Activated naive CD4-positive, alpha-beta T cell treated with anti-CD3 and anti-CD28 coated beads for 36 hours (primary cell): ENCODE measurements at regions of chr4 and their contacts with region 1.

Region 1: DNA sequence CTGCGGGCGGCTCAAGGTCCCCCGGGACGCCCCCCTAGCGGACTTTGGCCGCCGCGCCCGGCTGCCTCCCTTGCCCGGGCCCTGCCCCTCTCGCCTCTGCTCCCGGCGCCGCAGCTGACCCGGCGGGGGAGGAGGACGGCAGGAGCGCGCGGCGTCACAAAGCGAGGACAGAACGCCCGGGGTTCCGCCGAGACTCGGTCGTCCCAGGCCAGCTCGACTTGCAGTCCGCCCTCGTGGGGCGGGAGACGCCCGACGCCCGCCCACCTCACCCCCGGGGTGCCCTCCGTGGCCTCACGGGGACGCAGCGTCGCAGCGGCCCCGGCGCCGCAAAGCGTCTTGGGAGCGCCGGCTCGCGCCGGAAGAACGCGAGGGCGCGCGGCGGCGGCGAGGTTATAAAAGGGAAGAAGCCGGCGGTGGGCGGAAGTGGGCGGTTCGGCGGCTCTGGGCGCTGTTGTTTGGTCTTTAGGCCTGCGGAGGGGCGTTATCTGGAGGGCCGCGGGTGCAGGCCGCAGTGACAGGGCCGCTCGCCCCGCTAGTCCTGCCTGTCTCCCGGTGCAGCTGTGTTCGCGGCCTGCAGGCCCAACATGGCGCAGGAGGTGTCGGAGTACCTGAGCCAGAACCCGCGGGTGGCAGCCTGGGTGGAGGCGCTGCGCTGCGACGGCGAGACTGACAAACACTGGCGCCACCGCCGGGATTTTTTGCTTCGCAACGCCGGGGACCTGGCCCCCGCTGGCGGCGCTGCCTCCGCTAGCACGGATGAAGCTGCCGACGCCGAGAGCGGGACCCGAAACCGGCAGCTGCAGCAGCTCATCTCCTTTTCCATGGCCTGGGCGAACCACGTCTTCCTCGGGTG is at the start of gene CDKN2AIP:
- DNase-seq: peak; percentile 92
- H3K4me3 Mint-ChIP-seq: peak within 1 kb of the TSS; percentile 99
- H3K27ac Mint-ChIP-seq: peak within 1 kb of the TSS; percentile 98
- H3K4me1 Mint-ChIP-seq: peaks cover 41% of the 10 kb centered on the region
- H3K27me3 Mint-ChIP-seq: no peaks in the 10 kb centered on the region
- total RNA-seq, gene CDKN2AIP: 26.5 to 26.7 TPM

Region 2: GRCh38 chr4:182917182-182918043 is 527.0 kb before region 1 on chr4 and contains the start of gene DCTD:
- CTCF ChIA-PET with region 1: interaction called, 3 read pairs
- intact Hi-C with region 1: loop called (anchors 2 kb)
- DNase-seq: peak; percentile 83
- H3K4me3 Mint-ChIP-seq: peak within 1 kb of the TSS; percentile 86
- H3K27ac Mint-ChIP-seq: peak within 1 kb of the TSS; percentile 92
- H3K4me1 Mint-ChIP-seq: peaks cover 53% of the 10 kb centered on the region
- H3K27me3 Mint-ChIP-seq: no peaks in the 10 kb centered on the region
- total RNA-seq, gene DCTD: 137 to 152 TPM

Region 3: GRCh38 chr4:183398227-183399125 is 46.0 kb before region 1 on chr4:
- CTCF ChIA-PET with region 1: no interaction called
- intact Hi-C with region 1: loop called (anchors 2 kb)
- DNase-seq: peak; percentile 75
- H3K4me3 Mint-ChIP-seq: peak overlapping the region; percentile 85
- H3K27ac Mint-ChIP-seq: no peak overlapping the region
- H3K4me1 Mint-ChIP-seq: peaks cover 19% of the 10 kb centered on the region
- H3K27me3 Mint-ChIP-seq: no peaks in the 10 kb centered on the region

Region 4: DNA sequence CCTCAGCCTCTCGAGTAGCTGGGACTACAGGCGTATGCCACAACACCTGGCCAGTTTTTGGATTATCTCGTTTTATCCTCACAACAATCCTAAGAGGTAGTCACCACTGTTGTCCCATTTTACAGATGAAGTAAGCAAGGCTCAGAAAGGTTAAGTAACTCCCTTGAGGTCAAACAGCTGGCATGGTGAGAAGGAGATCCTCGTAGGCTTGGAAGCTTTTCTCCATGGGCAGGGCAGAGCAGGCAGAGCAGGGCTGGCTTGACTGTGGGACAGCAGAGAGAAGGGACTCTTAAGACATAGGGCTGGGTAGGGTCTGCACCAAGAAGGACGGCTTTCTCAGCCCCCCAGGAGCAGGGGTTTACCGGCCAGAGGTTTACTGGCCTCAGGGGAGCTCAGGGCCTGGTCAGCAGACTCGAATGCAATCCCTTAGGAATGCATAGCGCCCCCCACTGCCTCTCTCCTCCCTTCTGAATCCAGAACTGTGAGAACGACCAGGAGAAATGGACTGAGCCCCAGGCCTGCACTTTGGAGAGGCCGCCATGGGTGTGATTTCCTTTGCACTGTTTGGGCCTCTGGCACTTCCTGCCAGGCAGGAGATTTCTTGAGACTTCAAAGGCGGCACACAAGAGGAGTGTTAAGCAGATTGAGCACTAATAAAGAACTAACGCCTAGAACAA is 14.0 kb before region 1 on chr4:
- CTCF ChIA-PET with region 1: interaction called, 7 read pairs
- intact Hi-C with region 1: loop called (anchors 1 kb)
- DNase-seq: peak; percentile 55
- H3K4me3 Mint-ChIP-seq: peak overlapping the region; percentile 3
- H3K27ac Mint-ChIP-seq: peak overlapping the region; percentile 56
- H3K4me1 Mint-ChIP-seq: peaks cover 44% of the 10 kb centered on the region
- H3K27me3 Mint-ChIP-seq: no peaks in the 10 kb centered on the region

Region 5: DNA sequence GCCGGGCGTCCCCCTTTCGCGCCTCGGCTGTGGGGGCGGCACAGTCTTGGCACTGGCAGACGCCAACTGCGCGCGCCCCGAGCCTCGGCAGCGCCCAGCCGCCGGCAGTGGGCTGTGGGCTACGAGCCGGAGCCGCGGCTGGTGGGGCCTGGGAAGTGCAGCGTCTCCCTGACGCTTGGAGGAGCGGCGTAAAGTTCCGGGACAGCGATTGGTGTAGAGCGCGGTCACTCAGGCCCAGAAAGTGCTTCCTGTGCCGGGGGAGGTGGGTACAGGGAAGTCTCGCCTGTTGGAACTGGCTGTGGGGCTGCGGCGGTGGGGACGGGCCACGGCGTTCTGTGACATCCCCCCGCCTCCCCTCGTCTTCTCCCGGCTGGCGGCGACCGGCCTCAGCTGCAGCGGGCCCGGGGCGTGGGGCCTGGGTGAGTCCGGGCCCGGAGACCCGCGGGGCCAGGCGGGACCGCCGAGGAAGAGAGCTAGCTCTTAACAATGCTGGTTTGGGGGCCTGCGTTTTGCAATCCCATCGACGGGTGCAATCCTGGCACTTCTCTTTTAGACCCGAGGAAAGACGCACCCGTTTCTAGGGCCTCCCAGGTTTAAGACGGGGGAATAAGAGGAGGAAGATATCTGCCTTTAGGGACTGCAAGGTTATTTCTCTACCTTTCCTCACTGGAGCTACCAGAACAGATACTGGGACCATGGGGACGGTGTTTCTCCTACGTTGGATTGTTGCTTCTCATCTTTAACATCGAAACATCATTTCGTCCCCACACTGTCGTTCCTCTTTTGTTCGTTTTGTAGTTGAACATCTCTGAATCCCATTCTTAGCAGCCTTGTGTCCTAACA is 214.8 kb after region 1 on chr4 and contains the starts of genes RWDD4 and TRAPPC11:
- CTCF ChIA-PET with region 1: no interaction called
- intact Hi-C with region 1: loop called (anchors 1 kb)
- DNase-seq: peak; percentile 98
- H3K4me3 Mint-ChIP-seq: peak within 1 kb of the TSS; percentile 96
- H3K27ac Mint-ChIP-seq: peak within 1 kb of the TSS; percentile 68
- H3K4me1 Mint-ChIP-seq: peaks cover 32% of the 10 kb centered on the region
- H3K27me3 Mint-ChIP-seq: no peaks in the 10 kb centered on the region
- total RNA-seq, gene RWDD4: 17.8 to 20.8 TPM
- total RNA-seq, gene TRAPPC11: 25.0 to 32.6 TPM

Region 6: GRCh38 chr4:185203486-185204237 is 1759.2 kb after region 1 on chr4 and contains the start of gene CFAP97:
- CTCF ChIA-PET with region 1: no interaction called
- intact Hi-C with region 1: loop called (anchors 10 kb)
- DNase-seq: peak; percentile 73
- H3K4me3 Mint-ChIP-seq: peak within 1 kb of the TSS; percentile 96
- H3K27ac Mint-ChIP-seq: peak within 1 kb of the TSS; percentile 96
- H3K4me1 Mint-ChIP-seq: peaks cover 32% of the 10 kb centered on the region
- H3K27me3 Mint-ChIP-seq: no peaks in the 10 kb centered on the region
- total RNA-seq, gene CFAP97: 38.4 to 43.6 TPM